Activated naive CD4-positive, alpha-beta T cell treated with anti-CD3 and anti-CD28 coated beads for 36 hours (primary cell): ENCODE measurements at regions of chr1 and their contacts with region 1.

Region 1: DNA sequence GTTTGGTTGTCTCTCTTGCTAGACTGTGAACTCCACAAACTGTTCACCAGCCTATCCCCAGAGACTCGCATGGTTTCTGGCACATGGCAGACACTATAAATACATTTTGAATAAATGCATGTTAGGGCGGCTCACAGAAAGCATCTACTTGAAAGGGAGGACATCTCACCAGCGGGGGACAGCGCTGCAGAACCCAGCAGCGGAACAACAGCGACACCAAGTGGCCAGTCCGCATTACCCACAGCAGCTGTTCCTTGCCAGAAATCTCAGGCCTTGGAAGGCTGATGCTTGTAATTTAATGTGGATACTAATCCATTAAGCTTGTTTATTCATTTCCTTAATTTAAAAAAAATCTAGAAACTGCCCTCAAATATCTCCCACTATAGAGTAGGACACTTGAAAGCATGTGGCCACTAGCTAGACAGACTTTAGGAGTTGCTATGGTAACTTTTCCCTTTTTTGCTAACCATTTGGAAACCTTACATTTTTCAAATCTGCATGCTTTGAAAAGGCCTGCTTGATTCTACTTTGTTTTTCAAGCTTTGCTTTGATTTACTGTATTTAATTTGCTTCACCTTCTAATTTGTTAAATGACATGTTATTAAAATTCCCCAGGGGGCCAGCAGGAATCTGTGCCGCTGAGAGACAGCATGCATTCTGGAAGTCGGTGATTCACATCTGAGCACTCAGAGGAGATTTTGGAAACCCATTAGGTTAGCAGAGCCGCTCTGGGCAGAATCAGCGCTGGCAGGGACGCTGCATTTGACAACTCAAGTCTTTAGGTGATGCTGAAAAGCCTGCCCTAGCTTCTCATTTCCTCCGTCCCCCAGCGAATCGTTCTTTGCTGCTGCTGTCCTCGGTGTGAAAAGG is 63.5 kb upstream of the SSX2IP start:
- DNase-seq: peak; percentile 86
- H3K4me3 Mint-ChIP-seq: no peak overlapping the region
- H3K27ac Mint-ChIP-seq: no peak overlapping the region
- H3K4me1 Mint-ChIP-seq: peaks cover 6% of the 10 kb centered on the region
- H3K27me3 Mint-ChIP-seq: peaks cover 6% of the 10 kb centered on the region

Region 2: GRCh38 chr1:84122780-84123382 is 630.9 kb before region 1 on chr1:
- CTCF ChIA-PET with region 1: no interaction called
- intact Hi-C with region 1: loop called (anchors 1 kb)
- DNase-seq: peak; percentile 79
- H3K4me3 Mint-ChIP-seq: no peak overlapping the region
- H3K27ac Mint-ChIP-seq: no peak overlapping the region
- H3K4me1 Mint-ChIP-seq: no peaks in the 10 kb centered on the region
- H3K27me3 Mint-ChIP-seq: no peaks in the 10 kb centered on the region

Region 3: DNA sequence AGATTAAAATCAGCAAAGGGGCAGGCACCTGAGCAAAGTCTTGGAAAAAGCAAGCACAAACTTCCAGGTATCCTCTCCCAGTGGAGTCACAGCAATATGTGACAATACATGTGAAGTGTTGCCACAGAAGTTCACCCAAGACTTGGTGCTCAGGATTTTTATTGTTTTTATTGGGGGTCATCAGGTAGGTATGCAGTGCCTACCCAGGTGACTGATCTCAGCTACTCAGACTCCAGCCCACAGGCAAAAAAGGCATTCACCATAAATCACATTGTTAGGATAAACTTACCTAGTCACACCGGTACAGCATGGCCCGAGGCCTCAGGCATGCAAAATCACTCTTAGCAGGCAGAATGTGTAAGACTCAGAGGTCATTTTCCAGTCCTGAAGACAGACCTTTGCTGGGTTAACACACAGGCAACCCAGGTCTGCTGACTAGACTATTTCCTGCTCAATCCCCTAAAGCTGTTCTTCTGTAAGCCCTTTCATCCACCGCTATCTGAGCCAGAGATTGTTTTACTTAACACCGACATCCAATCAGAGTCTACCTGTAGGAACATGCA is 119.0 kb before region 1 on chr1:
- CTCF ChIA-PET with region 1: interaction called, 3 read pairs
- intact Hi-C with region 1: loop called (anchors 5 kb)
- DNase-seq: no peak
- H3K4me3 Mint-ChIP-seq: no peak overlapping the region
- H3K27ac Mint-ChIP-seq: no peak overlapping the region
- H3K4me1 Mint-ChIP-seq: no peaks in the 10 kb centered on the region
- H3K27me3 Mint-ChIP-seq: peaks cover 3% of the 10 kb centered on the region

Region 4: DNA sequence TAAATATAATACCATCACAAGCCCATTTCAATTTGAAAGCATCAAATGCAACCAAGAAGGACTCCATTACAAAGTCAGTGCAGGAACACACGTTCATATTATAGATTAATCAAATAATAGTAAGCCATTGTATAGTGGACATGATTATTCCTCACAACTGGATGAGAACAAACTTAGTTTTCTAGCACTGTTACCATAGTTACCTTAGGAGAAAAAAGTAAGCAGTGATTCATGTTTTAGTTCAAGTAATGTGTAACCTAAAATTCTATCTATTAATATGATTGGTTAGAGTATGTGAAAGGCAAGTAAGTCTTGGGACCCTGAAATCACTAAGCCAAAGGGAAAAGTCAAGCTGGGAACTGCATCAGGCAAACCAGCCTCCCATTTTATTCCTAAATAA is 78.6 kb before region 1 on chr1:
- CTCF ChIA-PET with region 1: interaction called, 13 read pairs
- intact Hi-C with region 1: no loop called
- DNase-seq: no peak
- H3K4me3 Mint-ChIP-seq: no peak overlapping the region
- H3K27ac Mint-ChIP-seq: no peak overlapping the region
- H3K4me1 Mint-ChIP-seq: peaks cover 14% of the 10 kb centered on the region
- H3K27me3 Mint-ChIP-seq: no peaks in the 10 kb centered on the region

Region 5: GRCh38 chr1:84772428-84772943 is 18.7 kb after region 1 on chr1:
- CTCF ChIA-PET with region 1: interaction called, 19 read pairs
- intact Hi-C with region 1: loop called (anchors 1 kb)
- DNase-seq: peak; percentile 86
- H3K4me3 Mint-ChIP-seq: no peak overlapping the region
- H3K27ac Mint-ChIP-seq: no peak overlapping the region
- H3K4me1 Mint-ChIP-seq: no peaks in the 10 kb centered on the region
- H3K27me3 Mint-ChIP-seq: no peaks in the 10 kb centered on the region